H1 (cell line): ENCODE measurements at regions of chr17 and their contacts with region 1.

Region 1: GRCh38 chr17:82370471-82371332 is 863 bp upstream of the UTS2R start:
- DNase-seq: no peak
- H3K4me3 ChIP-seq: peak overlapping the region in 3 of 4 experiments; percentile 14 to 61 (median 23); a peak in 2 of 8 replicates
- H3K27ac ChIP-seq: no peak overlapping the region
- H3K4me1 ChIP-seq: peaks cover 0 to 6% (median 0%) of the 10 kb centered on the region in 4 experiments; a peak in 1 of 7 replicates
- H3K27me3 ChIP-seq: peaks cover 28 to 61% (median 49%) of the 10 kb centered on the region in 4 experiments
- CTCF ChIP-seq: no peak
- EP300 ChIP-seq: no peak
- POLR2A ChIP-seq: no peak
- RAD21 ChIP-seq: no peak

Region 2: DNA sequence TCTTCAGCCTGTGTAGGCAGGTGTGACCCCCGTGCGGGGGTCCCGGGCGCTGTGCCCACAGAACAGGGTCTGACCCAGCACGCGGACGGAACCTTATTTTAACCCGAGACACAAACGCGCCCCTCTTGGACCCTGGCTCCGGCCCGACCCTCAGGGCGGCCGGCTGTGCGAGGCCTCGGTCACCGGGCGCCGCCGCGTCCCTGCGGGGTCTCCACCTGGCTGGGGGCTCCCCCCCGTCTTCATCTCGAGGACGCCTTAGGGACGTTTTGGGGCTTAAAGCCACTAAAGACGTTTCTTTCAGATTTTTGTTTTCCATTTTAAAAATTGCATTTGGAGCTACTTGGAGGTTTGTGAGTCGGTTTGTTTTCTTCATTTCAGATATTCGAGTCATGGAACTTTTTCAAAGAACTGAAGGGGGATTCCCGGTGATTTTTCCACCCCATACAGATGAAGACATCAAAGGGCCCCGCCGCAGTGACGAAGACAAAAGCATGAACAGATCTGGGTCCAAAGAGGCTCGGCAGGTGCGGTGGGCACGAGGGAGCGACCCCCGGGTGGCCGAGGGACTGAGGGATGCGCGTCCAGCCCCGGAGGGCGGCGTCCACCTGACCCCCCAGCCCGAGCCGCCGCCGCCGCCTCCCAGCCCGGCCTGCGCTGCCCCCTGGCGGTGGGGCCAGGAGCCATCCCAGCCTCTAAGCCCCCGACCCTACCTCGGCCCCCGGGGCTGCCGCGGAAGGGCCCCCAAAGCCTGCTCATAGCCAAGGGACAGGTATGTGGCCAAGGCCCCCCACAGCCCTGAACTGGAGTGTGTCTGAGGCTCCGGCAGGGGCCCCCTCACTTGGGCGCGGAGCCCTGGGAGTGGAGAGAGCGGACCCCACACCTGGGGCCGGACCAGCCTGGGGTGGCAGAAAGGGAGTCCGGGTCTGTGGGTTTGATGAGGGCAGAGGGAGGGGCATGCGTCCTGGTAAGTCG is 49.5 kb before region 1 on chr17:
- CTCF ChIA-PET with region 1: no interaction called
- POLR2A ChIA-PET with region 1: no interaction called
- DNase-seq: peak in 1 of 2 experiments; percentile 89
- H3K4me3 ChIP-seq: 0 out of 8 replicates have a peak overlapping the region, but pooled peaks of 1 of the 4 experiments have one; percentile 27
- H3K27ac ChIP-seq: no peak overlapping the region
- H3K4me1 ChIP-seq: no peaks in the 10 kb centered on the region; a peak in 4 of 7 replicates
- H3K27me3 ChIP-seq: no peaks in the 10 kb centered on the region; a peak in 2 of 7 replicates
- CTCF ChIP-seq: peak; percentile 72 to 89 (median 75)
- EP300 ChIP-seq: peak in 1 of 2 experiments; percentile 58; a peak in 1 of 3 replicates
- POLR2A ChIP-seq: no peak
- RAD21 ChIP-seq: peak; percentile 65 to 80

Region 3: DNA sequence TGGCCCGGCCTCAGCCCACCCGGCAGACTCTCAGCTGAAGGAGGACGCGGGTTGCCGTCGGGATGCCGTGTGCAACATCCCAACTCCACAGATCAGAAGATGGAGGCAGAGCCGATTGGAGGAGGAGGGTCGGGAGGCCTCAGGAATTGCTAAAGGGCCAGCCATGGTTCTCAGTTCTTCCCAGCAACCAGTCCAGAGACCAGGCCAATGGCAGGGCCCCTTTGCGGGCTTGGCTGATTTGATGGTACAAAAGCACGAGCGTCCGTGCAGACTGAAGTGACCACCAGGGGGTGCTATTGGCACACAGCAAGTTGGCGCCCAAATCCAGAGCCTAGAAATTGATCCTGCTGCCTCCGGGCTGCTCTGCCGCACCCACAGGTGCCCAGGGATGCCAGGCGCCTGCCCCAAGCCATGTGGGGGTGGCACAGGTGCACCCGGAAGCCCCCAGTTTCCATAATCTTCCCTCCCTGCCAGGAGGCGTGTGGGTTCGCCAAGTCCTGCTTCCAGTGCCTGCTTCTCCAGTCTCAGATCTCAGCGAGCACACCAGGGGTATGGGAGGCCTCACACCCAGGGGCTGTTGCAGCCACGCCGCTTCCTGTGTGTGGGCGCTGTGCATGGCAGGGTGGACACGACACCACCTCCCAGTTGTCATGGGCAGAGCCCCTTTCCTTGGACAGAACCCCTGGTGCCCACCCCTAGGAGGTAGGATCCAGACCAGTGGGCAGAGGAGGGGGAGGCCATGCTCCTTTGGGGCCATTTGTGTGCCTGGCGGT is 18.8 kb before region 1 on chr17:
- CTCF ChIA-PET with region 1: interaction called, 15 read pairs
- POLR2A ChIA-PET with region 1: interaction called, 5 read pairs
- DNase-seq: peak; percentile 85 to 92
- H3K4me3 ChIP-seq: no peak overlapping the region
- H3K27ac ChIP-seq: no peak overlapping the region
- H3K4me1 ChIP-seq: peaks cover 0 to 6% (median 4%) of the 10 kb centered on the region in 4 experiments; a peak in 5 of 7 replicates
- H3K27me3 ChIP-seq: no peaks in the 10 kb centered on the region
- CTCF ChIP-seq: peak; percentile 90 to 98 (median 91)
- EP300 ChIP-seq: no peak
- POLR2A ChIP-seq: no peak
- RAD21 ChIP-seq: peak; percentile 94

Region 4: GRCh38 chr17:82358465-82359350 is 12.0 kb before region 1 on chr17 and contains the start of gene TEX19:
- CTCF ChIA-PET with region 1: interaction called, 15 read pairs
- POLR2A ChIA-PET with region 1: interaction called, 5 read pairs
- DNase-seq: no peak
- H3K4me3 ChIP-seq: no peak within 1 kb of the TSS
- H3K27ac ChIP-seq: no peak within 1 kb of the TSS
- H3K4me1 ChIP-seq: peaks cover 0 to 11% (median 5%) of the 10 kb centered on the region in 4 experiments; a peak in 6 of 7 replicates
- H3K27me3 ChIP-seq: peaks cover 0 to 3% (median 1%) of the 10 kb centered on the region in 4 experiments; a peak in 3 of 7 replicates
- CTCF ChIP-seq: no peak
- EP300 ChIP-seq: no peak
- POLR2A ChIP-seq: no peak
- RAD21 ChIP-seq: no peak
- total RNA-seq, gene TEX19: 0.38 and 0.54 TPM in 2 replicates

Region 5: GRCh38 chr17:82384730-82385481 is 14.2 kb after region 1 on chr17:
- CTCF ChIA-PET with region 1: interaction called, 6 read pairs
- POLR2A ChIA-PET with region 1: interaction called, 14 read pairs
- DNase-seq: no peak
- H3K4me3 ChIP-seq: no peak overlapping the region
- H3K27ac ChIP-seq: no peak overlapping the region
- H3K4me1 ChIP-seq: peaks cover 0 to 9% (median 5%) of the 10 kb centered on the region in 4 experiments; a peak in 5 of 7 replicates
- H3K27me3 ChIP-seq: no peaks in the 10 kb centered on the region; a peak in 2 of 7 replicates
- CTCF ChIP-seq: no peak
- EP300 ChIP-seq: no peak
- POLR2A ChIP-seq: no peak
- RAD21 ChIP-seq: no peak